ENCODE measurements at regions of chr6 and their contacts with region 1.

Region 1: DNA sequence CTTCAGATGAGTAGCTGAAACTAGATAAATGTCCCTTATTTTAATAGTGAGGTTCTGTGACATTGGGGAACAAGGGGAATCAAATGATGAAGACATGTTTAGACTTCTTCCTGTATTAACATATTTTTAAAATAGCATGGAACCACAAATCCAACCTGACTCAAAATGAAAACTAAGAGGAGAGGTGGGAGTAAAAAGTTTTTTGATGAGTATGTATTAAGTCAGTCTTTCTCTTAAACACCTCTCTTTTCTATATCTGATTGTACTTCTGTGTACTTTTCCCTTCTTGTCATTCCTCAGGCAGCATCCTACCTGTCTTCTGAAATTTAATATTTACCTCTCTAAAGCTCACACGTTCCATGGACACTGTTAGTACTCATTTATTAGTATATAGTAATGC is 8.7 kb upstream of the SDHAF4 start:
- DNase-seq: no peak
- CTCF ChIP-seq: no peak

Region 2: GRCh38 chr6:70520575-70520974 is 37.4 kb before region 1 on chr6:
- CTCF ChIA-PET with region 1: no interaction called
- POLR2A ChIA-PET with region 1: no interaction called
- DNase-seq: peak; percentile 11
- CTCF ChIP-seq: peak; percentile 39

Region 3: GRCh38 chr6:70547313-70547712 is 10.7 kb before region 1 on chr6:
- CTCF ChIA-PET with region 1: interaction called, 14 read pairs
- POLR2A ChIA-PET with region 1: no interaction called
- DNase-seq: no peak
- CTCF ChIP-seq: peak; percentile 14

Measured in GM10248 (cell line).